PC-9 (cell line): ENCODE measurements at regions of chr2 and their contacts with region 1.

Region 1: GRCh38 chr2:213995400-213996105 is 415.3 kb upstream of the VWC2L start:
- DNase-seq: peak; percentile 67 to 99
- H3K4me3 ChIP-seq: no peak overlapping the region
- H3K27ac ChIP-seq: peak overlapping the region; percentile 56
- H3K4me1 ChIP-seq: peaks cover 19% of the 10 kb centered on the region
- H3K27me3 ChIP-seq: no peaks in the 10 kb centered on the region
- CTCF ChIP-seq: no peak

Region 2: GRCh38 chr2:213792045-213792444 is 203.5 kb before region 1 on chr2:
- CTCF ChIA-PET with region 1: no interaction called
- POLR2A ChIA-PET with region 1: no interaction called
- intact Hi-C with region 1: no loop called
- DNase-seq: no peak
- H3K4me3 ChIP-seq: no peak overlapping the region
- H3K27ac ChIP-seq: no peak overlapping the region
- H3K4me1 ChIP-seq: no peaks in the 10 kb centered on the region
- H3K27me3 ChIP-seq: no peaks in the 10 kb centered on the region
- CTCF ChIP-seq: no peak

Region 3: DNA sequence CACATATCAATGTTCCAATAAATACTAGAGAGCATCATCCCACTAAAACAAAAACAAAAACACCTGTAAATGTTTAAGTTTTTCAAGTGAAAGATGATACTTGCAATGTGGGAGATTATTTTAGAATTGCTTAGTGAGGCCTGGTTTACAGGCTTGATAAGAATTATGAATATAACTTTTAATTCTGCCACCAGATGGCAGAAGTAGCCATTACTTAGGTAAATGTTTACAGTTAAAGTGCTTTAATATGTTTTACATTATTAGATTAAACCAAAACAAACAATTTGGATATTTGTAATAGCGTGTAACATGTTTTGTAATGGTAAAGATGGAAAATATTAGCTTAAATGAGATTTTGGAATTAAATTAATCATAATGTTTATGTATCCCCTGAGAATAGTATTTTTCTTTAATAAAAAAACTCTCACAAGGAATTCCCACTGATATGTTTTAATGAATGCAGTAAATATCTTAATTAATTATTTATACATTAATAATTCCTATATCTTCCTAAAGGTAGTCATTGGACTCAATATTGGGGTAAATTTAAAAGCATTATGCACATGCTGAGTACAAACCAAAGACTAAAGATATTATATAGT is 189.3 kb before region 1 on chr2:
- CTCF ChIA-PET with region 1: no interaction called
- POLR2A ChIA-PET with region 1: no interaction called
- intact Hi-C with region 1: no loop called
- DNase-seq: no peak
- H3K4me3 ChIP-seq: no peak overlapping the region
- H3K27ac ChIP-seq: no peak overlapping the region
- H3K4me1 ChIP-seq: no peaks in the 10 kb centered on the region
- H3K27me3 ChIP-seq: no peaks in the 10 kb centered on the region
- CTCF ChIP-seq: peak; percentile 84

Region 4: DNA sequence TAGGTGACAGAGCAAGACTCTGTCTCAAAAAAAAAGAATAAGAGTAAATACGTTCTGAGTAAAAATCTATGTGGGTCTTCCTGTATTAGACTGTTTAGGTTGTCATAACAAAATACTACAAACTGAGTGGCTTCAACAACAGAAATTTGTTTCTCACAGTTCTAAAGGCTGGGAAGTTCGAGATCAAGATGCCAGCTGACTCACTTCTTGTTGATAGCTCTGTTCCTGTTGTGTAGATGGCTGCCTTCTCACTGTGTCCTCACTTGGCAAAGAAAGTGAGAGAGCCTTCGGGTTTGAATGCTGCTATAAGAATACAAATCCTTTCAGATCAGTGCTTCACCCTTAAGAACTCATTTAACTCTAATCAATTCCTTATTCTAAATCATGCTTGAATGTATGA is 14.7 kb before region 1 on chr2:
- CTCF ChIA-PET with region 1: no interaction called
- POLR2A ChIA-PET with region 1: interaction called, 10 read pairs
- intact Hi-C with region 1: no loop called
- DNase-seq: no peak
- H3K4me3 ChIP-seq: no peak overlapping the region
- H3K27ac ChIP-seq: no peak overlapping the region
- H3K4me1 ChIP-seq: no peaks in the 10 kb centered on the region
- H3K27me3 ChIP-seq: no peaks in the 10 kb centered on the region
- CTCF ChIP-seq: no peak

Region 5: DNA sequence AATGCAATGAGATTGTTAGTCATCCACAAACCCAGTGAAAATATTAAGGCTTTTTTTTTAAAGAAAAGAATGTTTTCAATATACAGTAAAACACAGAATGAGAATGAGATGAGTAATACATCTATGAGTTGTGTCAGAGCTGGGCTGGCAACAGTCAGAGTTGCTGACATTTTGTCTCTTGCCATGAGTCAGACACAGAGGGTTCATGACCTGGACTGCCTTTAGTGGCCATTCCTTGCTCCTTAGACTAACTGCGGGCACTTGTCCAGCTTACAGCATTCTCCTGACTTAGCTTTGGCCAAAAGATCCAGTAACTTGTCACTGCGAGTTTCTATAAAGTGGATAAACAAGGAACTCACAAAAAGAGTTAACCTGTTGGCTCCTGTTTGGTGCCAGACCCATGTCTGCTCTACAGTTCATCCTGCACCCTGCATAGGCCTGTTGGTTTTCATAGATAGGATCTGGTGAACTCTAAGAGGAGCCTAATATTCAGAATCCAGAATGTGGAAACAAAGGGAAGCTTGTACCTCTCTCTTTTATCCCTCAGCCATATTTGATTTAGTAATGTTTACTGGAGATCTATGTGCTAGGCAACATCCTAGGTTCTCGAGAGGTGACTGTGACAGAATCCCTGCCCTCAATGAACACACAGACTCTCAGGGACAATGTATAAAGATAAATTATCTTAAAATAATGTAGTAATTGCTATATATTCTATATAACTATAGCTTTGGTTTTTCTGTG is 23.8 kb after region 1 on chr2:
- CTCF ChIA-PET with region 1: no interaction called
- POLR2A ChIA-PET with region 1: interaction called, 4 read pairs
- intact Hi-C with region 1: loop called (anchors 1 kb)
- DNase-seq: peak; percentile 85 to 96
- H3K4me3 ChIP-seq: no peak overlapping the region
- H3K27ac ChIP-seq: peak overlapping the region; percentile 69
- H3K4me1 ChIP-seq: peaks cover 22% of the 10 kb centered on the region
- H3K27me3 ChIP-seq: no peaks in the 10 kb centered on the region
- CTCF ChIP-seq: no peak

Region 6: GRCh38 chr2:214378277-214379116 is 382.9 kb after region 1 on chr2:
- CTCF ChIA-PET with region 1: no interaction called
- POLR2A ChIA-PET with region 1: no interaction called
- intact Hi-C with region 1: loop called (anchors 1 kb)
- DNase-seq: peak; percentile 50 to 84
- H3K4me3 ChIP-seq: no peak overlapping the region
- H3K27ac ChIP-seq: no peak overlapping the region
- H3K4me1 ChIP-seq: peaks cover 17% of the 10 kb centered on the region
- H3K27me3 ChIP-seq: no peaks in the 10 kb centered on the region
- CTCF ChIP-seq: no peak